CD14-positive monocyte (primary cell): ENCODE measurements at regions of chrX and their contacts with region 1.

Region 1: DNA sequence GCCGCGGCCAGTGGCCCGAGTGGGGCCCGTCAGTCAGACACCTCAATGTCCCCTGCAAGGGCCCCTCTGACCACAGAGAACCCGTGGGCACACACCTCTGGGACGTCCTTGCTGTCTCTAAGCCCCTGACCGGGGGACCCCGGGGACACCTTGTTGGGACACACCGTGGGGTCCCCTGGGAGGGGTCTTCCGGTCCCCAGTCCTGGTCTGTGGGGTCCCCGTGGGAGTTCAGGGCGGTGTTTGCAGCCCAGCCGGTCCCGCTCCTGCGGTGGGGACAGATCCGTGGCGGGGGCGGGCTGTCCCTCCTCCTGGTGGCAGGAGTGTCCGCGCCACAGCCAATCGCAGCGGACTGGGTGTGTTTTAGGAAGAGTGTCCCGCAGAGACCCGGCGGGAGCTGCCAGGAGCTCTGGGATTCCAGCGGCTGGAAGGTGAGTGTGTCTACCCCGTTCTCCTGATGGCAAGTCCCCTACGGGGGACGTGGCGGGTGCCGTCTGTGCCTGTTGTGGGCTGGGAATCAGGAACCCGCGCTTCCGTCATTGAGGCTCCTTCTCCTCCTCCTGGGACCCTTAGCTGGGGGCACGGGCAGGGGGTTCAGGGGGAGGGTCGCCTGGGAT is 5.1 kb upstream of the PLCXD1 start:
- DNase-seq: peak; percentile 42 to 54 (median 47)
- H3K4me3 ChIP-seq: peak overlapping the region; percentile 77 to 98 (median 89)
- H3K4me3 Mint-ChIP-seq: peak overlapping the region; percentile 85 to 92
- H3K27ac ChIP-seq: peak overlapping the region; percentile 67 to 69
- H3K27ac Mint-ChIP-seq: peak overlapping the region; percentile 72 to 91 (median 84)
- H3K4me1 ChIP-seq: peaks cover 19 to 35% of the 10 kb centered on the region in 2 donors
- H3K4me1 Mint-ChIP-seq: peaks cover 20% of the 10 kb centered on the region
- H3K27me3 ChIP-seq: no peaks in the 10 kb centered on the region
- H3K27me3 Mint-ChIP-seq: peaks cover 2 to 7% (median 4%) of the 10 kb centered on the region in 3 donors
- CTCF ChIP-seq: peak; percentile 15

Region 2: DNA sequence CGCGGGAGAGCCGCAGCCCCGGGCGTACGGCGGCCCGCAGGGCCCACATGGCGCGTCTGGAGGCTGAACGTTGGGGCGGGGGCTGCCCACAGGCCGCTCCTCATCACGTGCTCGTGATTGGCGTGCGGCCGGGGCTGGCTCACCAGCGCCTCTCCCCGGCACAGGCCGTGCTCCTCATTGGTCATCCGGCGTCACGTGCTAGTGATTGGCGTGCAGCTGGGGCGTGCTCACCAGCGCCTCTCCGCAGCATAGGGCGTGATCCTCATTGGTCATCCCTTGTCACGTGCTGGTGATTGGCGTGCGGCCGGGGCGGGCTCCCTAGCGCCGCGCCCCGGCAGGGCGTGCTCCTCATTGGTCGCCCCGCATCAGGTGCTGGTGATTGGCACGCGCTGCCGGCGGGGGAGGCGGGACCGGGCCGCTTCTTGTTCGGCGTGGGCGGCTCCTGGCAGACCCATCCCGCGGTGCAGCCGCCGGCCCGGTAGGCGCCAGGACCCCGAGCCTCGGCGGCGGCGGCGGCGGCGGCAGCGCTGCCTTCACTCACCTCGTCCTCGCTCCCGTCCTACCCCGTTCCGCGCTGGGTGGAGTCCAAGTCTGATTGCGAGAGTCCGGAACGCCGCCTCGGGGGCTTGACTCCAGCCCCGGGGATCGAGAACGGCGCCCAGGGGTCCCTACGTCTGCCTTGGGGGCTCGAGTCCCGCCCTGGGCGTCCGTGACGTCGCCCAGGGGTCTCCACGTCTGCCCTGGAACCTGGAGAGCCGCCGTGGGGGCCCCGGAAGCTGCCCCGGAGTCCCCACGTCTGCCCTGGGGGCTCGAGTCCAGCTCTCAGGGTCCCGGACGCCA is 42.9 kb after region 1 on chrX and contains the start of gene GTPBP6:
- intact Hi-C with region 1: loop called (anchors 2 to 5 kb)
- DNase-seq: peak; percentile 99 to 100 (median 100)
- H3K4me3 ChIP-seq: peak within 1 kb of the TSS; percentile 81 to 98 (median 85)
- H3K4me3 Mint-ChIP-seq: peak within 1 kb of the TSS; percentile 85 to 93
- H3K27ac ChIP-seq: peak within 1 kb of the TSS; percentile 92 to 93
- H3K27ac Mint-ChIP-seq: peak within 1 kb of the TSS; percentile 96 to 100 (median 98)
- H3K4me1 ChIP-seq: peaks cover 19 to 23% of the 10 kb centered on the region in 2 donors
- H3K4me1 Mint-ChIP-seq: peaks cover 28% of the 10 kb centered on the region
- H3K27me3 ChIP-seq: peaks cover 0 to 24% of the 10 kb centered on the region in 2 donors
- H3K27me3 Mint-ChIP-seq: peaks cover 10 to 30% (median 29%) of the 10 kb centered on the region in 3 donors
- CTCF ChIP-seq: no peak
- polyA plus RNA-seq, gene GTPBP6: 17.2 to 39.3 (median 27.0) TPM

Region 3: GRCh38 chrX:590693-591404 is 314.8 kb after region 1 on chrX:
- intact Hi-C with region 1: no loop called
- DNase-seq: no peak
- H3K4me3 ChIP-seq: no peak overlapping the region
- H3K4me3 Mint-ChIP-seq: no peak overlapping the region
- H3K27ac ChIP-seq: no peak overlapping the region
- H3K27ac Mint-ChIP-seq: no peak overlapping the region
- H3K4me1 ChIP-seq: no peaks in the 10 kb centered on the region
- H3K4me1 Mint-ChIP-seq: no peaks in the 10 kb centered on the region
- H3K27me3 ChIP-seq: no peaks in the 10 kb centered on the region
- H3K27me3 Mint-ChIP-seq: peaks cover 2 to 7% (median 5%) of the 10 kb centered on the region in 3 donors
- CTCF ChIP-seq: no peak